WTC11 (cell line): ENCODE measurements at regions of chr3 and their contacts with region 1.

Region 1: DNA sequence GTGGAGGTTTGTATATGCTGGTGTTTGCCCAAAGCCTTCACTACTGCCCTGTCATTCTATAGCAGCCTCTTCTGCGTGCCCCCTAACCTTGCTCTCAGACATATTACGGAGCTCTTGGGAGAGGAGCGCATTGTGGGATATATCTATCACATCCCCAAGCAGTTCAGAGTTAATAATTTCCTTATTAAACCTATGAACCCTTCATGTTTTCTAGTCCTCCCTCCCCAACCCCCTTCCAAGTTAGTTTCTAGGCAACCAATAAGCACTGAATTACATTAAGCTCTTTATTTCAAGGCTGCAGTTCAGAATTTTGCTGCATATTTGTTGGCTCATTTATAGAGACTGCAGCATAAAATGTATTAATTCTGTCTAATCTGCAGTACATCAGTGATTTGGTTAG is 57.3 kb upstream of the GRM7 start:
- DNase-seq: no peak
- ATAC-seq: no peak
- H3K4me3 Mint-ChIP-seq: no peak overlapping the region
- H3K27ac Mint-ChIP-seq: no peak overlapping the region
- H3K4me1 Mint-ChIP-seq: no peaks in the 10 kb centered on the region
- H3K27me3 Mint-ChIP-seq: no peaks in the 10 kb centered on the region
- CTCF ChIP-seq: no peak

Region 2: DNA sequence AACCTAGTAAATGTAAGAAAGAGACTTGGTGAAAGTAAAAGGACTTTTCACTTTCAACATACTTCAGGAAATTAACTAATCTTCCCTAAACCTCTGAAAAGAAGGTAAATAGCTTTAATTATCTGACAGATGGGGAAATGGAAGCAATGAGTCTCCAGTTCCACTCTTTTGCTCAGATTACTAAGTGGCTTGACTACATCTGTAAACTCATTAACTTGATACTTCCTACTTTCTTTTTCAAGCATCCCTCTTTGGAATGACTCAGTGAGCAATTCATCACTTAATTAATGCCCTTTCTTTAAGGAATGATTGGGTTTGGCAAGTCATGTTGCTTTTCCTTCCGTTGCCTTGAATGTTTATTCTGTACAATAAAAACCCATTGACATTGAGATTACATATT is 291.5 kb after region 1 on chr3:
- CTCF ChIA-PET with region 1: no interaction called
- POLR2A ChIA-PET with region 1: interaction called, 10 read pairs
- DNase-seq: no peak
- ATAC-seq: no peak
- H3K4me3 Mint-ChIP-seq: no peak overlapping the region
- H3K27ac Mint-ChIP-seq: no peak overlapping the region
- H3K4me1 Mint-ChIP-seq: no peaks in the 10 kb centered on the region
- H3K27me3 Mint-ChIP-seq: no peaks in the 10 kb centered on the region
- CTCF ChIP-seq: no peak